ENCODE measurements at regions of chr11 and their contacts with region 1.

Region 1: DNA sequence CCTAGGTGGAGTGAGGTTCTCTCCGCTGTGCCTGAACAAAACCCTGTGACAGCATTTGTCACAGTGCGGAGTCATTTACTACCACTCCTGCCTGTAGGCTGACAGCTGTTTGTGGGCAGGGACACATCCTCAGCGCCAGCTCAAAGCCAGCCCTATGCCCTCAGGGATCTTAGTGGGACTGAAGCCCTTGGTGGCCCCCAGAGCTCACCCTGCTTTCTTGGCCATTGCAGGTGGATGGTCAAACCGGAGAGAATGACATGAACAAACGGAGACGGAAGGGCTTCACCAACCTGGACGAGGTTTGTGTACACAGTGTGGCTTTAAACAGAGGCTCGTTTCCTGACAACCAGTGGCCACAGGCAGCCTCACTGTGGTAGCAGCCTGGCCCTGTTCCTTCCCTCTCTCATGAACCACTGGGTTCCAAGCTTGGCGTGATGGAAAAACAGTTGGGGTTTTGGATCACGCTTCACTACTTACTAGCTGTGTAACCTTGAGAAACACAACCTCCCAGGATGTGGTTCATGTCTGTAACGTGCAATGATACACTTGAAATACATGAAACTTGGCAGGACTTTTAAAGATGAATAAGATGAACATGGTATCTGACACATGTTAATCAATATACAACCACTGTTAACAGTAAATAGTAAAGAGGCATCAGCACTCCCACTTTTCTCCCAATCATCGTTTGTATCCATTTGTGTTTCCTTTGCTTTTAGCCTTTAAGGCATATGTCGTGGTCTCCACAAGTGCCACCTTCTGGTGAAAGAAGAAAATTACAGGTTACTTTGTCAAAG is 125.8 kb downstream of the MICAL2 start:
- DNase-seq: peak in 1 of 2 experiments; percentile 68
- H3K4me3 ChIP-seq: no peak overlapping the region
- H3K4me3 Mint-ChIP-seq: no peak overlapping the region
- H3K27ac Mint-ChIP-seq: peak overlapping the region; percentile 75
- H3K4me1 ChIP-seq: peaks cover 68% of the 10 kb centered on the region
- H3K4me1 Mint-ChIP-seq: peaks cover 48% of the 10 kb centered on the region
- H3K27me3 ChIP-seq: no peaks in the 10 kb centered on the region
- H3K27me3 Mint-ChIP-seq: no peaks in the 10 kb centered on the region
- CTCF ChIP-seq: peak; percentile 62 to 70

Region 2: GRCh38 chr11:12122083-12122482 is 114.1 kb before region 1 on chr11:
- CTCF ChIA-PET with region 1: interaction called, 5 read pairs
- POLR2A ChIA-PET with region 1: no interaction called
- intact Hi-C with region 1: loop called (anchors 2 kb)
- DNase-seq: peak; percentile 52 to 57
- H3K4me3 ChIP-seq: no peak overlapping the region
- H3K4me3 Mint-ChIP-seq: no peak overlapping the region
- H3K27ac Mint-ChIP-seq: no peak overlapping the region
- H3K4me1 ChIP-seq: peaks cover 86% of the 10 kb centered on the region
- H3K4me1 Mint-ChIP-seq: peaks cover 78% of the 10 kb centered on the region
- H3K27me3 ChIP-seq: no peaks in the 10 kb centered on the region
- H3K27me3 Mint-ChIP-seq: no peaks in the 10 kb centered on the region
- CTCF ChIP-seq: peak; percentile 59 to 60

Region 3: DNA sequence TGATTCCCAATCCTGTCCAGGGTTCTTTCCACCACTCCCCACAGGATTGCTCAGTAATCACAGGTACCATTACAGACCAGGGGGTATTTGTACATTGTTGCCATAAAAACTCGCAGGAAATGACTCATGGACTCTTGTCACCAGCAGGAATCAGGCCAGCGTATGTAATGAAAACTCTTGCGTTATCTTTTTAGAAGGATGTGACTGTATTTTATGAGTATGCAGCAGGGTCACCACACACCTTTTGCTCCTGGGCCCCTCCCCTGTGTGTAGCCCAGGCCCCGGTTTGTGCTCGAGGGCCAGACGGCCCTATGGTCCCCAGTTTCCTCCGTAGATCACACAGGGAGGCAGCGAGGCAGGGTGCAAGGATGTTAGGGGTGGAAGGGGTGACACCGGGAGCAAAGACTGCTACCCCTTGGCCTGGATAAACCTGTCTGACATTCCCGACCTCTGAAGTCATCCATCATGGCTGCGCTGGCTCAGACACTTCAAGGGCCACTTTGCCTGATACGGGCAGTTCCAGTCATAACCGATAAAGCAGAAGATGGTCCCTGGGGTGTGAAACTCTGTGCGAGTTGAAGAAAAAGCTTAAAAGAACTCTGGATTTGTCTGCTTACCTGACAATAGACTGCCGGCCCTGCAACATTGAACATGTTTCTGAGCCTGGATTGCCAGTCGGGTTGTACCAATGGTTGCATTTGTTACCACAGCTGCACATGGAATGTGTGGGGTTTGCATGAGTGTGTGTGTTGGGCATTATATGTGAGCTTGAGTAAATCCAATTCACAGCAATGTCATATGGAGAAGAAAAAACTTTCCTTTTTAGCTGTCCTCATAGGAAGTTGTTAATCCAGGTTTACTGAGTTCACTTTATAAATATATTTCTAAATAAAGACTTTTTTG is 68.8 kb before region 1 on chr11:
- CTCF ChIA-PET with region 1: interaction called, 6 read pairs
- POLR2A ChIA-PET with region 1: interaction called, 6 read pairs
- intact Hi-C with region 1: loop called (anchors 1 kb)
- DNase-seq: peak; percentile 77 to 91
- H3K4me3 ChIP-seq: no peak overlapping the region
- H3K4me3 Mint-ChIP-seq: peak overlapping the region; percentile 48
- H3K27ac Mint-ChIP-seq: peak overlapping the region; percentile 70
- H3K4me1 ChIP-seq: peaks cover 71% of the 10 kb centered on the region
- H3K4me1 Mint-ChIP-seq: peaks cover 63% of the 10 kb centered on the region
- H3K27me3 ChIP-seq: no peaks in the 10 kb centered on the region
- H3K27me3 Mint-ChIP-seq: no peaks in the 10 kb centered on the region
- CTCF ChIP-seq: no peak

Region 4: DNA sequence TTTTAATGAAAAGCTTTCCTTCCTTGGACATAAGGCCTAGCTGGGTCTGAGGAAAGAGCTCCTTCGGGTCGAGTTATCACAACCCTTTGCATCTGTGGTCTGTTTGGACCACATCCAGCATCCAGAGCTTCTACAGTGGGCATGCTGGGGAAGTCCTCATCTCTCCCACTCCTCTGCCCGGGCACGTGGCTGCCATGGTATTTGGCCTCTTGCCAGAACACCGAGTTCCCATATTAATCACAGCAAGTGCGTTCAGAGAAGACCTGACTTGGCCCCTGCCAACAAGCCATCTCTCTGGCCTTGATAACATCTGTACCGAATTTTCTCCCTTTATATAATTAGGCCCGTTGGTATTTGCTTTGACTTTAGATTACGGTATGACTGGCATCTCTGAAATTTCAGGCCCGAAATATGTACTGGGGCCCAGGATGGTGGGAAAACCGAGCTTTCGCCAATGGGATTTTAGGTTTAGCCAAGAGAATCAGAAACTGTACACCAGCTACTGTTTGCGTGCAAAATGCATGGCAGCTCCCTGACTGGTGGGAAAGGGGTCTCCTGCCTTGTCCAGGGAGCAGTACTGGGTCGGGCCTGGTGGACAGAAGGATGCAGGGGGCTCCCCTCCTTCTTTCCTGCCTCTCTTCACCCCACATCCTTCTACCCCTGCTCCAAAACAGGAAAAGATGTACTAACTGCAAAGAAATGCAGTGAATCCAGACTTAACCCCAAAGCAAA is 35.7 kb before region 1 on chr11:
- CTCF ChIA-PET with region 1: interaction called, 7 read pairs
- POLR2A ChIA-PET with region 1: interaction called, 10 read pairs
- intact Hi-C with region 1: loop called (anchors 1 kb)
- DNase-seq: no peak
- H3K4me3 ChIP-seq: no peak overlapping the region
- H3K4me3 Mint-ChIP-seq: peak overlapping the region; percentile 56
- H3K27ac Mint-ChIP-seq: peak overlapping the region; percentile 92
- H3K4me1 ChIP-seq: peaks cover 63% of the 10 kb centered on the region
- H3K4me1 Mint-ChIP-seq: peaks cover 47% of the 10 kb centered on the region
- H3K27me3 ChIP-seq: no peaks in the 10 kb centered on the region
- H3K27me3 Mint-ChIP-seq: no peaks in the 10 kb centered on the region
- CTCF ChIP-seq: no peak

Region 5: DNA sequence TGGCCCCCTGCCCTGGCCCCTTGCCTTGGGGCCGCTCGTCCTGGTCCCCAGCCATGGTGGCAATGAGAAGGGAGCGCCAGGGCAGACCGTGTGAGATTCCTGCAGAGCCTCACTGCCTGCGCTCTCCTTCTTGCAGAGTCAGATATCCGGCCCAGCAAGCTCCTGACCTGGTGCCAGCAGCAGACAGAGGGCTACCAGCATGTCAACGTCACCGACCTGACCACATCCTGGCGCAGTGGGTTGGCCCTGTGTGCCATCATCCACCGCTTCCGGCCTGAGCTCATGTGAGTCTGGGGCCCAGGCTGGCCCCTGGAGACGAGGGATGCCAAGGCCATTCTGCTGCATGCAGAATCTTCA is 11.6 kb before region 1 on chr11:
- CTCF ChIA-PET with region 1: interaction called, 13 read pairs
- POLR2A ChIA-PET with region 1: no interaction called
- intact Hi-C with region 1: loop called (anchors 1 kb)
- DNase-seq: no peak
- H3K4me3 ChIP-seq: no peak overlapping the region
- H3K4me3 Mint-ChIP-seq: peak overlapping the region; percentile 6
- H3K27ac Mint-ChIP-seq: peak overlapping the region; percentile 81
- H3K4me1 ChIP-seq: peaks cover 56% of the 10 kb centered on the region
- H3K4me1 Mint-ChIP-seq: peaks cover 42% of the 10 kb centered on the region
- H3K27me3 ChIP-seq: no peaks in the 10 kb centered on the region
- H3K27me3 Mint-ChIP-seq: no peaks in the 10 kb centered on the region
- CTCF ChIP-seq: no peak

Region 6: GRCh38 chr11:12258451-12258850 is 22.3 kb after region 1 on chr11:
- CTCF ChIA-PET with region 1: interaction called, 3 read pairs
- POLR2A ChIA-PET with region 1: no interaction called
- intact Hi-C with region 1: loop called (anchors 2 kb)
- DNase-seq: peak; percentile 85 to 86
- H3K4me3 ChIP-seq: no peak overlapping the region
- H3K4me3 Mint-ChIP-seq: peak overlapping the region; percentile 42
- H3K27ac Mint-ChIP-seq: peak overlapping the region; percentile 96
- H3K4me1 ChIP-seq: peaks cover 67% of the 10 kb centered on the region
- H3K4me1 Mint-ChIP-seq: peaks cover 70% of the 10 kb centered on the region
- H3K27me3 ChIP-seq: no peaks in the 10 kb centered on the region
- H3K27me3 Mint-ChIP-seq: no peaks in the 10 kb centered on the region
- CTCF ChIP-seq: no peak

Measured in Caco-2 (cell line).